ENCODE measurements at regions of chr4 and their contacts with region 1.

Region 1: DNA sequence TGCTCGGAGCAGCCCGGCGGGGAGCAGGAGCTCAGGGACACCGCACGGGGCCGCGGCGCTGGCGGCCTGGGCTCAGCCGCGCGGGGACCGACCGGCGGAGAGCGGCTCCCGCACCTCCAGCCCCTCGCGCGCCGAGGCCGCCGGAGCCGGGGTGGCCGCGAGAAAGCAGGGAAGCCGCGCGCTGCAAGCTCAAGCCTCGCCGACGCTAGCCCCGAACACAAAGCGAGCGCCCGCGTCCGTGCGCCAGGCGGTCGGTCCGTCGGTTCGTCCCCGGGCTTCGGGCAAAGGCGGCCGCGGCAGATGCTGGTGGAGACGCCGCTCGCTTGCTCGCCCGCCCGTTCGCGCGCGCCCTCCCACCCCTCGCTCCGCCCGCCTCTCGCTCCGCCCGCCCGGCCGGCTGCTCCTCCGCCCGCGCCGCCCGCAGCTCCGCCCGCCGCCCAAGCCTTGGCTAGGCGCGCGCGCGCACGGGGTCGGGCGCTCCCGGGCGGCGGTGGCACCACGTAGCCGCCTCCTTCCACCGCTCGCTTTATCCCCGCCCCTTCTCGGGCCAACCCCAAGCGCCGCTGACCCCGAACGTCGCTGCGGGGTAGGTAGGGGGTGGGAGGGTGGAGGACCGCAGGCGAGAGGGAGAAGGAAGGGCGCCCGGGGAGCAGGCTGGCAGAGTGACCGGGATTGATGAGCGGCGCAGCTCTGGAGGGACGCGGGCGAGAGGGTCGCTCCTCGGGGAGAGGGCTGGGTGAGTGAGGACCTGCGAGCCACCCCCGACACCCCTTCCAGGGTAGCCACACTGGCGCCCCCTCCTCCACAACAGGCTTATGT is at the start of gene TSPAN5:
- DNase-seq: peak; percentile 87
- H3K4me3 Mint-ChIP-seq: peak within 1 kb of the TSS; percentile 87
- H3K27ac Mint-ChIP-seq: peak within 1 kb of the TSS; percentile 79
- H3K4me1 Mint-ChIP-seq: peaks cover 78% of the 10 kb centered on the region
- H3K27me3 Mint-ChIP-seq: no peaks in the 10 kb centered on the region
- total RNA-seq, gene TSPAN5: 19.2 to 20.4 TPM

Region 2: DNA sequence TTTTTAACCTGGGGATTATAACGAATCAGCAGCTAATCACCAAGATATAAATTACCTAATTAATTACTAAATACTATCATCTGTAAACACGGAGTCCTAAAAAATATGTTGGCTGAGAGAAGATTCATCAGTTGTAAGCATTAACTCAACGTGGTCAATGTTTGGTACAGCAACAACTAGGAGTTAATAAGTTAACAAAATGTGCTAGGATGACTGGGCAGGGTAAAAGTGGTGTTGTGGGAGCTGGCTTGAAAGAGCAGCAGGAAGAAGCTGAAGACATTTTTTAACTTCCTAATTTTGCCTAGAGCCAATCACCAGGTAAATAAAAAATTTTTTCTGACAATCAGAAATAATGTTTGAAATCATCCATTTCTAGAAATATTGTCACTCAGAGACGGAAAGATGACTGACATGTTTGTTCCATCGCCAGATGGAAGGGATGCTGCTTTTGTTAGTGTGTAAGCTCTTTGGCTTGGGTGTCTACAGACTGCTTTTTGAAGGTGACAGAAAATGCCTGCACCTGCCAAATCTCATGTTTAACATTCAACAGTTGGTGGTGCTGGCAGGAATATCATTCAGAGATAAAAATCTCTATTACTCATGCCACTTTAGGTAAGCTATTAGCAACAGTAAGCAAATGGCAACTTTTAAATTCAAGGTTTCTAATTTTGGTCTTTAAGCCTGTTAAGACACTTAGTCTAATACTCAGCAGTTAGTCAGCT is 1642.1 kb before region 1 on chr4:
- CTCF ChIA-PET with region 1: no interaction called
- POLR2A ChIA-PET with region 1: no interaction called
- intact Hi-C with region 1: no loop called
- DNase-seq: no peak
- H3K4me3 Mint-ChIP-seq: no peak overlapping the region
- H3K27ac Mint-ChIP-seq: no peak overlapping the region
- H3K4me1 Mint-ChIP-seq: no peaks in the 10 kb centered on the region
- H3K27me3 Mint-ChIP-seq: no peaks in the 10 kb centered on the region

Region 3: DNA sequence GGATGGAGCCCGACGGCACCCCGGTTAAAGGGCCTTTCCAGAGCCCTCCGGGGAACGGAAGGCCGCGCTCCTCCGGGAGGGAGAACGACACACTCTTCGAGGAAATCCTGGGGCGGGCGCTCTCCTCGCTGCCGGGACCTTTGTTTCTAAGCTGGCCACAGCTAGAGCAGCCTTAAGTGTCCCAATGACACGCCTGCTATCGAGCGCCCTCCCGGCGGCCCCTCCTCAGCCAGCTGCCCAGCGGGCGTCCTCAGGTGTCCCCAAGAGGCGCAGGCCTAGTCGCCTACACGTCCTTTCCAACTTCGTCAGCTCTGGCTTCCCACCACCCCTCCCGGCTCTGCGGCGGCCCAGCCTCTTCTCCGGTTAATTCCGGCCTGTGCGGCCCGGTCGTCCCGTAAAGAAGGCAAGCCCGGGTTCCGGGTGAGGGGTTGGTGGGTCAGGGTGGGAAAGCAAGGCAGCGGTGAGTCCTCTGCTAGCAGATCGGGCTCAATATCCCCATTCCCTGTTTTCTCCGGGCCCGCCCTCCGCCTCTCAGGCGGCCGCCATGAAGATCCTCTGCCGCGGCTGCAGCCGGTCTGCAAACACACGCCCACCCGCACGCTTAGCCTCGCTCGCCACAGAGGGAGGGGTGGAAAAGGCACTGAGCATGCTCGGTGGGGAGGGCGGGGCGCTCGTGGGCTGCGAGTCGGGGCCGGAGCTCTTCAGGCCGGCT is 397.8 kb before region 1 on chr4:
- CTCF ChIA-PET with region 1: no interaction called
- POLR2A ChIA-PET with region 1: interaction called, 3 read pairs
- intact Hi-C with region 1: loop called (anchors 5 kb)
- DNase-seq: peak; percentile 96
- H3K4me3 Mint-ChIP-seq: peak overlapping the region; percentile 95
- H3K27ac Mint-ChIP-seq: peak overlapping the region; percentile 97
- H3K4me1 Mint-ChIP-seq: peaks cover 43% of the 10 kb centered on the region
- H3K27me3 Mint-ChIP-seq: no peaks in the 10 kb centered on the region

Region 4: DNA sequence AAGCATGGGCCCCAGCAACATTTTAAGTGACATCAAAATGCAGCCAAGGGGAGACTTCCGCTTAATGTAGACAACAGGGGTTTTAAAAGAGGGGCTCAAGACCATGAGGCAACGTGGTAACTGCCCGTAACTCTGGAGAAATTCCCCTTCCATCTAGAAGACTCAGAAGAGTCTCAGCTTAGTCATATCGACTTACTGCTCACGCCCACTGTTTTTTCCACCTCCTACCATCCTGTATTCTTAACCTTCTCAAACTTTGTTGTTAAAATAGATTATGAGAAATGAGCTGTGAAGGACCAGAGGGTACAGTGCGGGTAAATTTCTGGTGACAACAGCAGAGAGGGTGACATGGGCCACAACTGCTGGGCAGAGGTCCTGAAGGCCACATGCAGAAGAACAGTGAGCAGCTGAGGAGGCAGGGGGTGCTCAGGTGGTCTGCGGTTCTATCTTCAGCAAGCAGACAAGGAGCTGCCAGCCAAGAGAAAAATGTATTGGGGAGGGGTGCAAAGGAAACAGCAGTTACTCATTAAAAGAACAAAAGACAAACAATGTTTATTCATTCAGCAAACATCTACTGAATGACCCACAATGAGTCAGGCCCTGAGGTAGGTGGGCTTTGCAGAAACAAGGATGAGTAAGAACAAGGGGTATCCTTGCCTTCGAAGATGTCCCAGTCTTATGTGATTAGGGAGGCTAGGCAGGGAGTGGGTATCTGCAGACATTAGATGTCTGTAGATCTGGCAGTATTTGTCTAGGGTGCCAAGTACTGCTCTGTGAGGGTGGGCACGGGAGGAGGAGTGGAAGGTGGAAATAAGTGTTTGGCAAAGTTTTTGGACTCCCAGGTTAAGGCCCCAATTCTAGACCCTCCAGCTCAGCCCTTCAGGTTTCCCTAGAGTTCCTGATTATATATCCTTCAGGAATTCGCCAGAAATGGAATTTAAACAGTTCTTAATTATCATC is 175.4 kb before region 1 on chr4:
- CTCF ChIA-PET with region 1: interaction called, 3 read pairs
- POLR2A ChIA-PET with region 1: interaction called, 7 read pairs
- intact Hi-C with region 1: loop called (anchors 1 kb)
- DNase-seq: peak; percentile 69
- H3K4me3 Mint-ChIP-seq: peak overlapping the region; percentile 47
- H3K27ac Mint-ChIP-seq: peak overlapping the region; percentile 96
- H3K4me1 Mint-ChIP-seq: peaks cover 74% of the 10 kb centered on the region
- H3K27me3 Mint-ChIP-seq: no peaks in the 10 kb centered on the region

Region 5: GRCh38 chr4:98639523-98639922 is 19.0 kb before region 1 on chr4:
- CTCF ChIA-PET with region 1: interaction called, 3 read pairs
- POLR2A ChIA-PET with region 1: interaction called, 5 read pairs
- intact Hi-C with region 1: loop called (anchors 1 kb)
- DNase-seq: no peak
- H3K4me3 Mint-ChIP-seq: peak overlapping the region; percentile 66
- H3K27ac Mint-ChIP-seq: peak overlapping the region; percentile 74
- H3K4me1 Mint-ChIP-seq: peaks cover 56% of the 10 kb centered on the region
- H3K27me3 Mint-ChIP-seq: no peaks in the 10 kb centered on the region

Region 6: DNA sequence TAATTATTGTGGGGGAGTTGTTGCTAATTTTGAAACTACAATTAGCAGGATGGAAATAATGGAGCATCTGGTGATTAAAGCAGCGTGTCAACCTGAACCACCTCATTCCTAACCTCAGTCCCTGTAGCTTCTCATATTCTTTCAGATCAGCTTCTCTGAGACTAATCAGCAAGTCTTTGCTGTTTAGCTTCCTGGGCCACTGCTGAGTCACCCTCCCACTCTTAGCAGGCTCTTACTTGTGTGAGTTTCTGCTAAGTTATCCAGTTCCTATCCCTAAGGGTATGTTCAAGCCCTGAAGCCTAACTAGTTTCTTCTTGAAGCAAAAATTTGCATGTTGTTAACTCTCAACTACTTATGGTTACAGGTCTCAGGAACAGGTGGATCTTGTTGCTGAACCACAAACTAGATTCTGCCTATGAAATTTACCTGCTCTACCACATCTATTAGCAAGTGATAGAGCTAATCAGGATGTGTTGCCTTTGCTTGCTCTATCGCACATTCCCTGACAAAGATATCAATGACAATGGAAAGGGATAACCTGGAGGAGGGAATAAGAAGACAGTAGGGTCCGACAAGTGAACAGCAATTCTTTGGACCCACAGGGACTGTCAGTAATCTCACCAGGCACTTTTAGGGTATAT is 136.2 kb after region 1 on chr4:
- CTCF ChIA-PET with region 1: no interaction called
- POLR2A ChIA-PET with region 1: no interaction called
- intact Hi-C with region 1: loop called (anchors 1 kb)
- DNase-seq: peak; percentile 73
- H3K4me3 Mint-ChIP-seq: no peak overlapping the region
- H3K27ac Mint-ChIP-seq: no peak overlapping the region
- H3K4me1 Mint-ChIP-seq: peaks cover 18% of the 10 kb centered on the region
- H3K27me3 Mint-ChIP-seq: no peaks in the 10 kb centered on the region

Region 7: DNA sequence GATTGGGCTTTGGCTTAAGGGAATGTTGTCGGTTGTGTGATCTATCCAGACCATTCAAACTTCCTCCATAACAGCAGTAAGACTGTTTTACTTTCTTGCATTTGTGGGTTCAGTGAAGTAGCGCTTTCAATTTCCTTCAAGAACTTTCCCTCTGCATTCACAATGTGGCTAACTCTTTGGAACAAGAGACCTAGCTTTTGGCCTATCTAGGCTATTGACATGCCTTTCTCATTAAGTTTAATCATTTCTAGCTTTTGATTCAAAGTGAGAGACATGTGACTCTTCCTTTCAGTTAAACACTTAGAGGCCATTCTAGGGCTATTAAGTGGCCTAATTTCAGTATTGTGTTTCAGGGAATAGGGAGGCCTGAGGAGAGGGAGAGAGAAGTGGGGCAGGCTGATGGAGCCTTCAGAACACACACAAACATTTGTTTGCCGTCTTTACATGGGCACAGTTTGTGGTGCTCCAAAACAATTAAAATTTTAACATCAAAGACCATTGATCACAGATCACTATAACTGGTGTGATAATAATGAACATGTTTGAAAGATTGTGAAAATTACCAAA is 396.0 kb after region 1 on chr4:
- CTCF ChIA-PET with region 1: interaction called, 6 read pairs
- POLR2A ChIA-PET with region 1: no interaction called
- intact Hi-C with region 1: loop called (anchors 2 kb)
- DNase-seq: no peak
- H3K4me3 Mint-ChIP-seq: no peak overlapping the region
- H3K27ac Mint-ChIP-seq: peak overlapping the region; percentile 73
- H3K4me1 Mint-ChIP-seq: peaks cover 42% of the 10 kb centered on the region
- H3K27me3 Mint-ChIP-seq: no peaks in the 10 kb centered on the region